Activated T-helper 2 cell treated with anti-CD3 and anti-CD28 coated beads, Interferon-gamma antibody, Interleukin-2, Interleukin-4, amounts not matched to agents 10 μg/mL and 5 μg/mL and 100 μg/mL, durations not matched to agents 14 hours and 24 hours and 36 hours (primary cell): ENCODE measurements at regions of chr5 and their contacts with region 1.

Region 1: DNA sequence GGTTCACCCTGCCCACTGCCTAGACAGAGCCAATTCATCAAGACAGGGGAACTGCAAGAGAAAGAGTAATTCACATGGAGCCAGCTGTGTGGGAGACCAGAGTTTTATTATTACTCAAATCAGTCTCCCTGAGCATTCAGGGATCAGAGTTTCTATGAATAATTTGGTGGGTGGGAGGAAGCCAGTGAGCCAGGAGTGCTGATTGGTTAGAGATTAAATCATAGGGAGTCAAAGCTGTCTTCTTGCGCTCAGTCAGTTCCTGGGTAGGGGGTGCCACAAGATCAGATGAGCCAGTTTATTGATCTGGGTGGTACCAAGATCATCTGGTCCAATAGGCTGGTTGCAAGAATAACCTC is 24.5 kb downstream of the TBCA start:
- DNase-seq: no peak
- H3K4me3 Mint-ChIP-seq: no peak overlapping the region
- H3K27ac Mint-ChIP-seq: peak overlapping the region; percentile 30
- H3K4me1 Mint-ChIP-seq: peaks cover 37% of the 10 kb centered on the region
- H3K27me3 Mint-ChIP-seq: no peaks in the 10 kb centered on the region

Region 2: GRCh38 chr5:77669677-77670076 is 82.0 kb before region 1 on chr5:
- intact Hi-C with region 1: loop called (anchors 5 kb)
- DNase-seq: no peak
- H3K4me3 Mint-ChIP-seq: no peak overlapping the region
- H3K27ac Mint-ChIP-seq: no peak overlapping the region
- H3K4me1 Mint-ChIP-seq: no peaks in the 10 kb centered on the region
- H3K27me3 Mint-ChIP-seq: peaks cover 4% of the 10 kb centered on the region

Region 3: DNA sequence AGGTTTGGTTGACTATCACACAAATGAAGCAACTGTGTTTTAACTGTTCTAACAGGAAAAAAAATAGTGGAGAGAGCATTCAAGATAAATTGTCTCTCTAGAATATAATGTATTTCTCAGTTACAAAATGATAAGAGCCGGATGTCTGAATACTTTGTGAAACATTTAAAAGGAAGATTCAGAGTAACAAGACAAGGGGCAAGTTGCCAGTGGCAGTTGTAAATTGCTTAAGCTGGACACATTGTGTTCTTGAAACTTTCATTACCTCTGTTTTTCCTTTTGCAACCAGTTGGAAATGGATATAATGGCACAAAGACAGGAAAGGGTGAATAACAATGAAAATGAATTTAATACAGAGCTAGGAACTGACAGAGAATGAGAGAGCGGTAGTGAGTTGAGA is 39.7 kb after region 1 on chr5:
- intact Hi-C with region 1: no loop called
- DNase-seq: no peak
- H3K4me3 Mint-ChIP-seq: no peak overlapping the region
- H3K27ac Mint-ChIP-seq: no peak overlapping the region
- H3K4me1 Mint-ChIP-seq: no peaks in the 10 kb centered on the region
- H3K27me3 Mint-ChIP-seq: peaks cover 14% of the 10 kb centered on the region

Region 4: GRCh38 chr5:77935506-77936364 is 184.1 kb after region 1 on chr5:
- intact Hi-C with region 1: no loop called
- DNase-seq: peak; percentile 26
- H3K4me3 Mint-ChIP-seq: peak overlapping the region; percentile 20
- H3K27ac Mint-ChIP-seq: peak overlapping the region; percentile 30
- H3K4me1 Mint-ChIP-seq: peaks cover 16% of the 10 kb centered on the region
- H3K27me3 Mint-ChIP-seq: peaks cover 8% of the 10 kb centered on the region

Region 5: DNA sequence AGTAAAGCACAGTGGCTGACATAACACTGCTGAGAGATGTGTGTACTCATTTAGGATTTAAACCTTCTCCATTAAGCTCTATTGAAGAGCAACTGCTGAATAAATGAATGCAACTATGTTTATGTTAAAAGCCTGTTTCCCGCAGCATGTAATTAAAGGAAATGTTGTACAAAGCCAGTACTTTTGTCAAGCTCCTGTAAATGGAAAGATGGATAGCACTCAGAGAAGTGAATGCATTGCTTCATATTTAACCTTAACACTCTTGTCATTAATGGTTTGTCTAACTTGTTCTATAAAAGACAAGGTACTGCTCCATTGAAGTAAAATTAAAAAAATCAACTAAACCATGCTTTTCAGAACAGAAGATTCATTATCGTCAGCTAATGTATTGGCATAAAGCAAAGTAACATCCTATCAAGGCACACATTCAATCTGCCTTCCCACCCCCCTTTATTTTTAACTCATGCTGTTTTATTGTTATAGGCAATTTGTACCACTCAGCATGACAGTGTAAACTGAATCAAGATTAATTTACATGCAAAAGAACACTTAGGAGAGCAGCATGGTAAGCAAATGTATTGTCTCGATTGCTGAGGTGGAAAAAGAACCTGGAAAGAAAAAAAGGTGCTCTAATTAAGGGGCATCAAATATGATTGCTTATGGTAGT is 265.4 kb after region 1 on chr5:
- intact Hi-C with region 1: no loop called
- DNase-seq: no peak
- H3K4me3 Mint-ChIP-seq: no peak overlapping the region
- H3K27ac Mint-ChIP-seq: no peak overlapping the region
- H3K4me1 Mint-ChIP-seq: peaks cover 2% of the 10 kb centered on the region
- H3K27me3 Mint-ChIP-seq: no peaks in the 10 kb centered on the region